ENCODE measurements at regions of chr2 and their contacts with region 1.

Region 1: GRCh38 chr2:28621172-28622100 is 125.6 kb downstream of the PLB1 start:
- DNase-seq: peak; percentile 47
- ATAC-seq: peak; percentile 68
- H3K4me3 Mint-ChIP-seq: peak overlapping the region; percentile 66
- H3K27ac Mint-ChIP-seq: peak overlapping the region; percentile 91
- H3K4me1 Mint-ChIP-seq: peaks cover 83% of the 10 kb centered on the region
- H3K27me3 Mint-ChIP-seq: no peaks in the 10 kb centered on the region

Region 2: DNA sequence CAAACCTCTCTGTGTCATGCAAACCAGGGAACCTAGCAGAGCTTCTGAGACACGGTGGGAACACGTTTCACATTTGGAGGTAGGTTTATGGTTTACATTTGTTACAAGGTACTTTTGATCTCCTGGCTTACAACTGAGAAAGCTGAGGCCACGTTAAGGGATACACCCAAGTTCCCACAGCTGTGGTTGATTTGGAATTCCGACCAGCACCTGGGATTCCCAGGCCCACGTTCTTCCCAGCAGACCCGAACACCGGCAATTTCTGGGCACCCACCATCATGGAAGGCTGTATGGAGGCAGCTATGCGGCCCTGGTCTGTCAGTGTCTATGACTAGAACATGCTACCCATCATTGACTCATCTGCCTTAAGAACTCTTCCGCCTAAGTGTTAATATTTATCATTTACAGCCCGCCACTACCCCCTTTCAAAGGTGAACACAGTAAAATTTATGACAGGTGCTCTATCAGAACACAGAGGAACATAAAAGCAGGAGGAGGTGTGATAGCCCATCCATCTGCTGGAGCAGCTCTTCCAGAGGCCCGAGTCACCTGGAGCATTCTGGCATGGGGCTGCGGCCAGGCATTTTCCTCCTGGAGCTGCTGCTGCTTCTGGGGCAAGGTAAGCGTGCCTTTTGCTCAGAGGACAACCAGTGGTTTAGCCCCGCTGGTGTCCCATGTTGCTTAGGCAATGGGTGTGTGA is 125.7 kb before region 1 on chr2 and contains the start of gene PLB1:
- POLR2A ChIA-PET with region 1: no interaction called
- DNase-seq: no peak
- ATAC-seq: no peak
- H3K4me3 Mint-ChIP-seq: no peak within 1 kb of the TSS
- H3K27ac Mint-ChIP-seq: no peak within 1 kb of the TSS
- H3K4me1 Mint-ChIP-seq: no peaks in the 10 kb centered on the region
- H3K27me3 Mint-ChIP-seq: peaks cover 25% of the 10 kb centered on the region
- total RNA-seq, gene PLB1: 0.30 to 0.43 TPM

Region 3: DNA sequence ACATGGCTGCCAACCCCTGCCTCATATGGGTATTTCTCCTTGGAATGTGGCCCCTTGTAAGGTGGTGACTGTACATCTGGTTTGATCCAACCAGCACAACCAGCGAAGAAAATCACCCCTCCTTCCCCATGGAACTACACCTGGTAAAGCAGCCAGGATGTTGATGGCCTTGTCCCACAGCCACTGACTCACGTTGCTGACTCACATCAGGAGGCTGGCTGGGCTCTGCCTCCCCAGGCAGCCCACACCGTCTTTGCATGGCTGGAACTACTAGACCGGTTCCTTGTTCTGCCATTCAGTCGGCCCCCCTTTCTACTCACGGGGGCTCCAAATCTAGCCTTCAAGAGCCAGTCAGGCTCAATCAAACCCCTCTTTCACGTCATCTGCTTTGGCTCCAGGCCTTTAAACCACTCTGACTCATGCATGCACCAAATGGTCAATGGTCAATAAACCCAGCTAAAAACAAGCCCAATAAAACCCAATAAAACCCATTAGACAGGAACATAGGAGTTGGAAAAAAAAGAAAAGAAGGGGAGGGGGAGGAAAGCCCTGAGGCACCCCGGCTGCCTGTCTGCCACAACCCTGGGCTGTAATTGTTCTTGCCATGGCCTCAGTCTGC is 10.7 kb before region 1 on chr2:
- POLR2A ChIA-PET with region 1: interaction called, 25 read pairs
- DNase-seq: no peak
- ATAC-seq: no peak
- H3K4me3 Mint-ChIP-seq: no peak overlapping the region
- H3K27ac Mint-ChIP-seq: peak overlapping the region; percentile 40
- H3K4me1 Mint-ChIP-seq: peaks cover 22% of the 10 kb centered on the region
- H3K27me3 Mint-ChIP-seq: no peaks in the 10 kb centered on the region

Measured in activated naive CD8-positive, alpha-beta T cell treated with anti-CD3 and anti-CD28 coated beads, Interleukin-2, amount 10 ng/mL, durations not matched to agents 7 days and 5 days (primary cell).